ENCODE measurements at regions of chr12 and their contacts with region 1.

Region 1: GRCh38 chr12:49763006-49763591 is 21.7 kb downstream of the TMBIM6 start:
- DNase-seq: no peak
- H3K4me3 ChIP-seq: no peak overlapping the region
- H3K27ac ChIP-seq: no peak overlapping the region
- H3K27me3 ChIP-seq: no peaks in the 10 kb centered on the region
- CTCF ChIP-seq: peak; percentile 74

Region 2: DNA sequence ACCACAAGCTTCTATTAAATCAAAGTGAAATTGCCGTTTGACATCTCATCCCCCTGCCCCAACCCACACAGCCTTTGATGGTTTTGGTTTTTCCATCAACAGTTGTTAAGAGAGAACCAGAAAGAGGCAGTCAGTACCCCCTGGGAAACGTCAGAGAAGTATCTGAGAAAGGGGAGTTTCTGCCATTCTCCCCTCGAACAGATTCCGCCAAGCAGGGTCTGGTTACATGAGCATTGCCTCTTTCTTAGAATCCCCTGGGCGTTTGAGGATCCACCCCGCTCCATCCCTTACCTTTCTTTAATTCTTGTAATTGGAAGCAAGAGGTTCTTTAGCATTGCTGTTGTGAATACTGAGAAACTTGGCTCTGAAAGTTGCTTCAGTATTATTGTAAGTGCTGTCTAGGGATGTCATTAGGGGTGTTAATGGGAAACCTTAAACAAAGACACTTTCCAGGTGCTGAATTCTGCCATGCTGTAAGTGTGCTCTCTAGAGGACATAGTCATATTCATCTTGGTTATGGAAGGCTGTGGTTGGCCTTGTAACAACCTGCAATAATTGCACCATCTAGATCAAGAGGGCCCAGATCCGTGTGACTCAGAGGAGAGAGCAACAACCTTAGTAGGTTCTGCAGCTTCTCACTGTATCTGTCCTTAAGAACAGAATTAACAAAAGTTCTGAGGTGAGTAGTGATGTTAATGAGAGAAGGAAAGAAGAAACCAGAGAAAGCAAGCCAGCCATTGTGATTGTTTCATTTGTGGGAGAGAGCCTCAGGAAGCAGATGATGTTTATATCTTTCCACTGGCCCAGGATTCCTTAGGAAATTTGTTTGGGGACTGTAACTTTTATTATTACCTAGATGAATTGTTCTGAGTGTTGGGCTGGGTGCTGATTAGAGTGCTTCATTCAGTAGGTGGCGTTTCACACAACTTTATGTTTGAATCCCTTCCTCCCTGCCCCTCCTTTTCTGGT is 12.8 kb before region 1 on chr12:
- CTCF ChIA-PET with region 1: interaction called, 13 read pairs
- POLR2A ChIA-PET with region 1: interaction called, 7 read pairs
- DNase-seq: no peak
- H3K4me3 ChIP-seq: no peak overlapping the region
- H3K27ac ChIP-seq: peak overlapping the region; percentile 63
- H3K27me3 ChIP-seq: no peaks in the 10 kb centered on the region
- CTCF ChIP-seq: no peak

Region 3: DNA sequence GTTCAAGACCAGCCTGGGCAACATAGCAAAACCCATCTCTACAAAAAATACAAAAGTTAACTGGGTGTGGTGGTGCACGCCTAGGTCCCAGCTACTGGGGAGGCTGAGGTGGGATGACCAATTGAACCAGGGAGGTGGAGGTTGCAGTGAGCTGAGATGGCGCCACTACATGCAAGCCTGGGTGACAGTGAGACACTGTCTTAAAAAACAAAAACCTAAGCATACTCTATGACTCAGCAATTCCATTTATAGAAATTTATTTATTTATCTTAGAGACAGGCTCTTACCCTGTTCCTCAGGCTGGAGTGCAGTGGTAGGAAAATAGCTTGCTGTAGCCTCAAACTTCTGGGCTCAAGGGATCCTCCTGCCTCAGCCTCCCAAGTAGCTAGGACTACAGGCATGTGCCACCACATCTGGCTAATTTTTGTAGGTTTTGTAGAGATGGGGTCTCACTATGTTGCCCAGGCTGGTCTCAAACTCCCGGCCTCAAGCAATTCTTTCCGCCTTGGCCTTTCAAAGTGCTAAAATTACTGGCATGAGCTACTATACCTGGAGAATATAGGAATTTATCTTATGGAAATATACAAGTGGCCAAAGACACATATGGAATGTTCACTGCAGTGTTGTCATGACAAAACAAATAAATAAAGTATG is 21.8 kb after region 1 on chr12:
- CTCF ChIA-PET with region 1: no interaction called
- POLR2A ChIA-PET with region 1: no interaction called
- DNase-seq: no peak
- H3K4me3 ChIP-seq: no peak overlapping the region
- H3K27ac ChIP-seq: peak overlapping the region; percentile 80
- H3K27me3 ChIP-seq: peaks cover 1% of the 10 kb centered on the region
- CTCF ChIP-seq: no peak

Region 4: GRCh38 chr12:49801141-49802063 is 38.3 kb after region 1 on chr12:
- CTCF ChIA-PET with region 1: interaction called, 3 read pairs
- POLR2A ChIA-PET with region 1: interaction called, 16 read pairs
- DNase-seq: no peak
- H3K4me3 ChIP-seq: no peak overlapping the region
- H3K27ac ChIP-seq: no peak overlapping the region
- H3K27me3 ChIP-seq: no peaks in the 10 kb centered on the region
- CTCF ChIP-seq: no peak

Region 5: GRCh38 chr12:49828133-49829091 is 65.3 kb after region 1 on chr12 and contains the start of gene NCKAP5L:
- CTCF ChIA-PET with region 1: interaction called, 4 read pairs
- POLR2A ChIA-PET with region 1: interaction called, 10 read pairs
- DNase-seq: peak; percentile 96
- H3K4me3 ChIP-seq: peak within 1 kb of the TSS; percentile 86
- H3K27ac ChIP-seq: peak within 1 kb of the TSS; percentile 90
- H3K27me3 ChIP-seq: no peaks in the 10 kb centered on the region
- CTCF ChIP-seq: no peak
- polyA plus RNA-seq, gene NCKAP5L: 5.6 and 7.3 TPM in 2 replicates

Region 6: DNA sequence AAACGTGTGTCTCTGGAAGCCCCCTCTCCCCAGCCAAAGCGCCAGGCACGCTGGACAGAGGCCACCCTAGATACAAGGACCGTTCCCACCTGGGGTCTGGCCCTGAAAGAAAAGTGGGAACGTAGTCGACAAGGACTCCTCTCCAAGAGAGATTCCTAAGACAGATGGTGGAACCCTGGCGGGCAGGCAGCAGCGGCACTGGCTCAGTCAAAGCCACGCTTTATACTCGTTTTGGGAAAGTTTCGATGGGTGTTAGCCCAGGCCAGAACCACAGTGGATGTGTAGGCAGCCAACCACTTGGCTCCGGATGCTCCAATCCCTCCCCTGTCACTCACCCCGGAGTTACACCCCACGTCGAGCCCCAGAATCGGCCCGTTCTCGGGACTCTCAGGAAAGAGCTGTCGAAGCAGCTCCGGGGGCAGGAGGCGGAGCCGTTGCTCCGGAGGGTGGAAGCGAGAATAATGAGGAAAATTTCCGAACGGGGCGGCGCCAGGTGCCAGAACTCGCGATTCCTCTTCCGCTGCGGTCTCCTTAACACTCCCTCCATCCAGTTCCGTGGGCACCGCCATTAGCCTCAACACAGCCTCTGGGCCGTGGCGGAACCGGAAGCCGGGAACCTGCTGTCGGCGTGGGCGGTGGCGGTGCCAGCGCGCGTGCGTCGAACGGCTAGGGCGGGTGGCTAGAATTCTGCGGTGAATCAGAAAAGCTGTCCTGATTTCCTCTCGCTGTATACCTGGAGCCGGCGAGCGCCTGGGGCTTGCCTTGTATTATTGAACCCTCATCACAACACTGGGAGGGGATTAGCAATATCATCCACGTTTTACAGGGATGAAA is 79.6 kb after region 1 on chr12 and contains the start of gene BCDIN3D:
- CTCF ChIA-PET with region 1: interaction called, 14 read pairs
- POLR2A ChIA-PET with region 1: interaction called, 3 read pairs
- DNase-seq: peak; percentile 65
- H3K4me3 ChIP-seq: peak within 1 kb of the TSS; percentile 83
- H3K27ac ChIP-seq: peak within 1 kb of the TSS; percentile 92
- H3K27me3 ChIP-seq: no peaks in the 10 kb centered on the region
- CTCF ChIP-seq: no peak
- polyA plus RNA-seq, gene BCDIN3D: 3.7 and 3.8 TPM in 2 replicates

Region 7: DNA sequence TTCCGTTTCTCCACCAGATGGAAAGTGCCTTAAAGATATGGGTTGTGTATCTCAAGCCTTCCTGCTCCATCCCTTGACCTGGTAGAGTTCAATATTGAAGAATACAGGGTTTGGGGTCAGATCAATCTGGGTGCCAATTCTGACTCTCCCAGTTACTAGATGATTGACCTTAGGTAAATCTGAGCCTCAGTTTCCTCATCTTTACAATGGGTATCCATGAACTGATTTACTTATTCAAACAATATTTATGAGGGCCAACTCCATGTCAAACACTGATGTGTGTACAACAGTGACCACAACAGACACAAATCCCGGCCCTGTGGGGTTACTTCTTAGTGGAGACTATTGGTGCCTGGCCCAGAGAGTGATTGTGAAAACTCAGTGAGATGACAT is 148.1 kb after region 1 on chr12:
- CTCF ChIA-PET with region 1: no interaction called
- POLR2A ChIA-PET with region 1: no interaction called
- DNase-seq: no peak
- H3K4me3 ChIP-seq: no peak overlapping the region
- H3K27ac ChIP-seq: no peak overlapping the region
- H3K27me3 ChIP-seq: peaks cover 2% of the 10 kb centered on the region
- CTCF ChIP-seq: no peak

Measured in AG04450 (cell line).